Activated CD8-positive, alpha-beta memory T cell treated with anti-CD3 and anti-CD28 coated beads, Interleukin-2, amount 10 ng/mL, durations not matched to agents 7 days and 5 days (primary cell): ENCODE measurements at regions of chr17 and their contacts with region 1.

Region 1: GRCh38 chr17:49997791-49998703 is 3.0 kb upstream of the DLX3 start:
- DNase-seq: peak; percentile 90
- ATAC-seq: peak; percentile 93
- H3K4me3 Mint-ChIP-seq: no peak overlapping the region
- H3K27ac Mint-ChIP-seq: no peak overlapping the region
- H3K4me1 Mint-ChIP-seq: peaks cover 24% of the 10 kb centered on the region
- H3K27me3 Mint-ChIP-seq: peaks cover 71% of the 10 kb centered on the region

Region 2: DNA sequence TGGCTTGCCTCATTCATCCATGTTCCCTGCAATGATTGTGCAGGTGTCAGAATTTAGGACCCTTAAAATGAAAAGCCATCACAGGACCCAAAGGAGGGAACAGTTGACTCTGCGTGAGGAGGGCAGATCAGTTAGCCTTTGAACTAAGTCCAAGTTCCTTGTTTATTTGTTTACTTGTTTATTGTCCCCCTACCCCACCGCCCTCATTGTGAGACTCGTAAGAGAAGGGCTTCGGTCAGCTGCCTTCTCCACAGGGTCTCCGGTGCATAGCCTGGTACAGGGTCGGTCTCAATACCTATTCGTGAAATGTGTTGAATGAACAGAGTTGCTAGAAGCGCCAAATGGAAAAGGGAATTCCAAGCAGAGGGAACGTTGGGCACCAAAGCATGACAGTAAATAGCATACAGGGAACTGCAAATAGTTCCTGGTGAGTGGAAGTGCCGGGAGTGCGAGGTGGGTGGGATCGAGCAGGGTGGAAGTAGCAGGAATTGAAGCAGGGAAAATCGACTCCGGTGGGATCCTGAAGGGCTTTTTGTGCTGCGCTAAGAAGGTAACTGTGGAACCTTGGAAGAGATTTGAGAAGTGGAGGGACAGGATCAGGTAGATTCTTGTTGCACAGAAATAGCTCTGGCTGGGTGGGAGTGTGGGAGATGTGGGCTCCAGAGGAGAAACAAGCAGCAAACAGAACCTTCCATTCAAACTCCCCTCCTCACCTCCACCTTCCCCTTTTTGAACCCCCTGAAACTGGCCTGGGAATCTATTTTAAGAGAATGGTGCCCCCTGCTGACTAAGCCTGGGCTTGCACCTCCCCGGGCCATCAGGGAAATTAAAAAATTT is 303.0 kb before region 1 on chr17:
- CTCF ChIA-PET with region 1: interaction called, 18 read pairs
- DNase-seq: peak; percentile 83
- ATAC-seq: peak; percentile 38
- H3K4me3 Mint-ChIP-seq: no peak overlapping the region
- H3K27ac Mint-ChIP-seq: peak overlapping the region; percentile 83
- H3K4me1 Mint-ChIP-seq: peaks cover 33% of the 10 kb centered on the region
- H3K27me3 Mint-ChIP-seq: no peaks in the 10 kb centered on the region

Region 3: DNA sequence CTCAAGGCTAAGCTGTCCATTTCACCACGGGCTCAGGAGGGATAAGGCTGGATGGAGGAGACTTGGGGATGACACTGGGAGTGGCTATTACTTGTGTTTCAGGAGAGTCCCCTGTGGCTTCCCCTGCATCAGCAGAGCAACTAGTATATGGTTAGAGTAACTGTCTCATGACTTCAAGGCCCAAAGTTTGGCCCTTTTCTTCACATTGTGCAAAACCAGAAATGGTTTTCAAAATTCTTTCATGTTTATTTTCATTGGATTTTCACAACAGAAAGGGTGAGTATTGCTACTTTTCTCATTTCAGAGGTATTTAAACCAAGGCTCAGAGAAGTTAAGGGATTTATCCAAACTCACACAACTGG is 132.0 kb before region 1 on chr17:
- CTCF ChIA-PET with region 1: interaction called, 202 read pairs
- DNase-seq: no peak
- ATAC-seq: no peak
- H3K4me3 Mint-ChIP-seq: no peak overlapping the region
- H3K27ac Mint-ChIP-seq: no peak overlapping the region
- H3K4me1 Mint-ChIP-seq: peaks cover 2% of the 10 kb centered on the region
- H3K27me3 Mint-ChIP-seq: peaks cover 10% of the 10 kb centered on the region

Region 4: GRCh38 chr17:49926886-49927285 is 71.2 kb before region 1 on chr17:
- CTCF ChIA-PET with region 1: interaction called, 23 read pairs
- DNase-seq: no peak
- ATAC-seq: no peak
- H3K4me3 Mint-ChIP-seq: no peak overlapping the region
- H3K27ac Mint-ChIP-seq: no peak overlapping the region
- H3K4me1 Mint-ChIP-seq: no peaks in the 10 kb centered on the region
- H3K27me3 Mint-ChIP-seq: peaks cover 32% of the 10 kb centered on the region

Region 5: DNA sequence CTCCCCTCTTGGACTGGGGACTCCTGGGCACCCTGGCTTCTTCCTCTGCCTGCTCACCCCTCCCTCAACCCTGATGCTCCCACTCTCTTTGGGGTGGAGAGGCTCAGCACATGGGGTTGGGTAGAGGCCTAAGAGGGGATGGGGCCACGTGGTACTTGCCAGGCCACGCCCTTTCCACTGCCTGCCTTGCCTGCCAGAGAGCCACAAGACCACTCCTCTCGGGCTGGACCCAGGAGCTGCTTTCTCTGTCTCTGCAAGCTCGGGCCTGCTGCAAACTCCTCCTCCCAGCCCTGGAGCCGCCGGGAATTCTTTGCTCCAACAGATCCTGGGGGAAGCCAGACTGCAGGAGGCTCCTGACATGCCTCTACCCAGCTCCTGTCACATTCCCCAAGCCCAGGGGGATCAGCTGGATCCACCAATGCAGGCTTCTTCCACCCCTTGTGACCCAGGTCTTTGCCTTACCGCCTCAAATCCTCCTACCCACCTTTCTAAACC is 17.3 kb before region 1 on chr17:
- CTCF ChIA-PET with region 1: interaction called, 113 read pairs
- DNase-seq: no peak
- ATAC-seq: no peak
- H3K4me3 Mint-ChIP-seq: no peak overlapping the region
- H3K27ac Mint-ChIP-seq: no peak overlapping the region
- H3K4me1 Mint-ChIP-seq: no peaks in the 10 kb centered on the region
- H3K27me3 Mint-ChIP-seq: peaks cover 53% of the 10 kb centered on the region

Region 6: GRCh38 chr17:50087246-50087911 is 89.3 kb after region 1 on chr17:
- CTCF ChIA-PET with region 1: interaction called, 32 read pairs
- DNase-seq: peak; percentile 86
- ATAC-seq: peak; percentile 90
- H3K4me3 Mint-ChIP-seq: no peak overlapping the region
- H3K27ac Mint-ChIP-seq: no peak overlapping the region
- H3K4me1 Mint-ChIP-seq: no peaks in the 10 kb centered on the region
- H3K27me3 Mint-ChIP-seq: no peaks in the 10 kb centered on the region

Region 7: GRCh38 chr17:50279181-50279526 is 281.1 kb after region 1 on chr17:
- CTCF ChIA-PET with region 1: no interaction called
- DNase-seq: no peak
- ATAC-seq: no peak
- H3K4me3 Mint-ChIP-seq: no peak overlapping the region
- H3K27ac Mint-ChIP-seq: no peak overlapping the region
- H3K4me1 Mint-ChIP-seq: peaks cover 26% of the 10 kb centered on the region
- H3K27me3 Mint-ChIP-seq: peaks cover 36% of the 10 kb centered on the region